ENCODE measurements at regions of chr9 and their contacts with region 1.

Region 1: DNA sequence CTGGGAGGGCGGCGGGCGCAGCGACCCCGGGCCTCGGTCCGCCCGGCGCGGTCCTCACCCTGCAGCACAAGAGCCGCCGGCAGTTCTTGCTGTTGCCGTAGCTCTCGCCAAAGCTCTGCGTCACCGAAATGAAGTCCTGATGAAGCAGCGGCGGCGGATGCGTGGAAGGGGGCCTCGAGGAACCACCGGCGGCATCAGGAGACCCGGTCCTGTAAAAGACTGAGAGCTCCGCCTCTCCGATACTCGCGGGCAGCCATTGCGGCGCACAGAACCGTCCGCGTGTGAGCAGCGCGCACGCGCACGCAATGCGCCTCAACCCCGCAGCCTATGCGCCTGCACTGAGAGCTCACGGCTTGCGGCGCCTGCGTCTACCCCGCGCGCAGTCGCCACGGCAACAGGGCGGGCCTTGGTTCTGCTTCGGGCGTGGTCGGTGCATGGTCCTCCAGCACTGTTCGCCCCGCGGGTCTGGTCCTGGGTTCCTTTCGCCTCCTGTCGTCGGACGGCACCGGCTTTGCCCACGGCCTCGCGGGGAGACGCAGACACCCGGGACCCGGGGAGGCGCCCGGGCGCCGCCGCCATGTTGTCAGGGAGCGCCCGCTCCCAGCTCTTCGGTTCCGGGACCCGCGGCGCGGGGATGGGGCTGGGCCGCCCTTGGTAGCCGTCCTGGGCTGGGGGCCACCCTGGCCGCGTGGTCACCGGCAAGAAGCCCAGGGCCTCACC is 9.3 kb upstream of the GRIN1 start:
- DNase-seq: peak; percentile 94
- ATAC-seq: peak; percentile 94
- H3K4me3 Mint-ChIP-seq: peak overlapping the region; percentile 83
- H3K27ac Mint-ChIP-seq: peak overlapping the region; percentile 81
- H3K4me1 Mint-ChIP-seq: peaks cover 28% of the 10 kb centered on the region
- H3K27me3 Mint-ChIP-seq: peaks cover 7% of the 10 kb centered on the region

Region 2: GRCh38 chr9:137086531-137087408 is 42.8 kb before region 1 on chr9 and contains the start of gene MAN1B1:
- CTCF ChIA-PET with region 1: interaction called, 10 read pairs
- DNase-seq: peak; percentile 100
- ATAC-seq: peak; percentile 86
- H3K4me3 Mint-ChIP-seq: peak within 1 kb of the TSS; percentile 82
- H3K27ac Mint-ChIP-seq: peak within 1 kb of the TSS; percentile 90
- H3K4me1 Mint-ChIP-seq: peaks cover 41% of the 10 kb centered on the region
- H3K27me3 Mint-ChIP-seq: no peaks in the 10 kb centered on the region
- total RNA-seq, gene MAN1B1: 43.8 to 60.6 TPM

Region 3: DNA sequence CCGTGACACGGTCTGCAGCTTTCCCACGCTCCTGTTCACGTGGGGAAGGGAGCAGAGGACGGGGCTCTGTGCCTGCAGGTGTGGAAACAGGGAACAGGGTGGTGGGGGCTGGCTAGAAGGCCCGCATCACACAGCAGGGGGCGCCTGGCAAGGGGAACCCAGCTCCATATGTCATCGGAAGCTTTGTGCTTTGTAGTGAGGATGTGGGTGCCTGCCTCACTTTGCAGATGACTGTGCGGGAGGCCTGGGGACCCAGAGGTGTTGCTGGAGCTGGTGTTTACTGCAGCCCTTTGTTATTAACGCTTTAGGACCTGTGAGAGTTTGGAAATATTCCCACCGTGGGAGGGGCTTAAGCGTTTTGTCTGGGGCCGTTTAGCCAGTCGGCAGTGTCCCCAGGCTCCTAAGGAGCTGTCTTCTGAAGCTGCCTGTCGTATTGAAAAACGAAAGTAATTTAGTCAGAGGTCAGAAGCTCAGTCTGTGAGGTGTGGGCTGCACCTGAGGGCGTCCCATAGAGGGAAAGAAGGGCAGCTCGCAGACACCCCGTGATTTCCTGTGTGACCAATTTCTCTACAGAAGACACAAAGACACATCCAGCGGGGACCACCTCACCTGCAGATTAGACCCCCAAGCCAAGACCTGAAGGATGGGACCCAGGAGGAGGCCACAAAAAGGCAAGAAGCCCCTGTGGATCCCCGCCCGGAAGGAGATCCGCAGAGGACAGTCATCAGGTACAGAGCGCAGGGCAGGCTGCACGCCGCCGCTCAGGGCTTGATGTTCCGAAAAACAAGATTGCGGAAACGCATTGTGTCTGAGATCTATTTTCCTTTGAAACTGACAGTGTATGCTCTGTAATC is 33.7 kb before region 1 on chr9:
- CTCF ChIA-PET with region 1: interaction called, 13 read pairs
- DNase-seq: peak; percentile 95
- ATAC-seq: peak; percentile 98
- H3K4me3 Mint-ChIP-seq: peak overlapping the region; percentile 85
- H3K27ac Mint-ChIP-seq: peak overlapping the region; percentile 97
- H3K4me1 Mint-ChIP-seq: peaks cover 30% of the 10 kb centered on the region
- H3K27me3 Mint-ChIP-seq: no peaks in the 10 kb centered on the region

Region 4: GRCh38 chr9:137114610-137115391 is 14.8 kb before region 1 on chr9 and contains the start of gene DPP7:
- CTCF ChIA-PET with region 1: interaction called, 12 read pairs
- DNase-seq: peak; percentile 85
- ATAC-seq: peak; percentile 96
- H3K4me3 Mint-ChIP-seq: peak within 1 kb of the TSS; percentile 66
- H3K27ac Mint-ChIP-seq: peak within 1 kb of the TSS; percentile 52
- H3K4me1 Mint-ChIP-seq: peaks cover 10% of the 10 kb centered on the region
- H3K27me3 Mint-ChIP-seq: no peaks in the 10 kb centered on the region
- total RNA-seq, gene DPP7: 271 to 321 TPM

Region 5: GRCh38 chr9:137188490-137189296 is 59.1 kb after region 1 on chr9 and contains the starts of genes ANAPC2 and SSNA1:
- CTCF ChIA-PET with region 1: interaction called, 12 read pairs
- DNase-seq: peak; percentile 93
- ATAC-seq: peak; percentile 81
- H3K4me3 Mint-ChIP-seq: peak within 1 kb of the TSS; percentile 93
- H3K27ac Mint-ChIP-seq: peak within 1 kb of the TSS; percentile 92
- H3K4me1 Mint-ChIP-seq: peaks cover 35% of the 10 kb centered on the region
- H3K27me3 Mint-ChIP-seq: no peaks in the 10 kb centered on the region
- total RNA-seq, gene ANAPC2: 59.8 to 69.7 TPM
- total RNA-seq, gene SSNA1: 80.2 to 91.3 TPM